CD4-positive, alpha-beta memory T cell (primary cell): ENCODE measurements at regions of chr16 and their contacts with region 1.

Region 1: DNA sequence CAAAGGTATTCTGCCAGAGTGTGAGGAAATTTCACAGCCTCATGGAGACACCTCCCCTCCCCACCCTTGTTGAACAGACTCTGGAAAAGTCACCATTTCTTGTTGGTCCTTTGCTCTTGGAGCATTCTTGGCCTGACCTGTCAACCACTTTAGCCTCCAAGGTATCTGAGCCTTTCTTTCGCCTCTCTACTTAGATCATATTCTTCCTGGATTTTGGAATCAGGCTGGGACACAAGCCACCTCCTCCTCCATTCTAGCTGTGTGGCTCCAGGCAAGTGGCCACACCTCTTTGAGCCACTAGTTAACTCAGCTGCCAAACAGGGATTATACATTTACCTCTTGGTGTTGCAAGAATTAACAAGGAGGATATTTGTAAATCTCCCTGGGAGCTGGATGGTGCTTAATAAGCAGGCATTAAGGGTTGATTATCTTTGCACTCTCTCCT is 193.5 kb downstream of the WWOX start:
- DNase-seq: no peak
- H3K4me3 ChIP-seq: no peak overlapping the region
- H3K4me3 Mint-ChIP-seq: no peak overlapping the region
- H3K27ac ChIP-seq: no peak overlapping the region
- H3K27ac Mint-ChIP-seq: no peak overlapping the region
- H3K4me1 ChIP-seq: no peaks in the 10 kb centered on the region
- H3K4me1 Mint-ChIP-seq: no peaks in the 10 kb centered on the region
- H3K27me3 ChIP-seq: no peaks in the 10 kb centered on the region
- H3K27me3 Mint-ChIP-seq: no peaks in the 10 kb centered on the region

Region 2: GRCh38 chr16:78211893-78212292 is 81.0 kb before region 1 on chr16:
- CTCF ChIA-PET with region 1: no interaction called
- POLR2A ChIA-PET with region 1: no interaction called
- intact Hi-C with region 1: no loop called
- DNase-seq: no peak
- H3K4me3 ChIP-seq: no peak overlapping the region
- H3K4me3 Mint-ChIP-seq: no peak overlapping the region
- H3K27ac ChIP-seq: no peak overlapping the region
- H3K27ac Mint-ChIP-seq: no peak overlapping the region
- H3K4me1 ChIP-seq: no peaks in the 10 kb centered on the region
- H3K4me1 Mint-ChIP-seq: no peaks in the 10 kb centered on the region
- H3K27me3 ChIP-seq: no peaks in the 10 kb centered on the region
- H3K27me3 Mint-ChIP-seq: no peaks in the 10 kb centered on the region

Region 3: DNA sequence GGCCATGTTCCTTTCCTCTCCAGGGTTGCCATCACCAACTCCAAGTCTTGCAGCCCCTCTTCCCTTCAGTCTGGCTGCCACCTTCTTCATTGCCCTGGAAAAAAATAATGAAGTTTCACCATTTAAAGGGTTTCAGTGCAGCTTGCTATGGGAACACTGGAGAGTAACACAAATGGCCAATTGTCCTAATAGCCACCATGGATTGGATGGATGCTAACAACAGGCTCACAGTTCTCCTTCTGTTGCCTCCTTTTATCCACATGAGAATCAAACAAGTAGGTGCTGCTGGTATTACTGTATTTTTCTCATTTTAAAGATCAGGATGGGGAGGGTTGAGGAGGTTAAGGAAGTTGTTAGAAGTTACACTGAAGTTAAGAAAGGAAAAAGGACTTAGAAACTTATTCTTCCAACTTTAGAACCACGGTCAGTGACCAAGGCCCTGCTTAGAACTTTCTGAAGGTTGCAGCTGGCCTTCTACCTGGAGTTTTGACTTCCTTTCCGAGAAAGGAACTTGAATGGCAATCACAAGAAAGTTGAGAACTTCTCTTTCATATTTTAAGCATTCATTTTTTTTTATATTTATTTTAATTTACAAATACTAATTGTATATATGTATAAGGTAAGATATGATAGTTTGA is 1505.6 kb after region 1 on chr16:
- CTCF ChIA-PET with region 1: no interaction called
- POLR2A ChIA-PET with region 1: no interaction called
- intact Hi-C with region 1: loop called (anchors 5 kb)
- DNase-seq: no peak
- H3K4me3 ChIP-seq: no peak overlapping the region
- H3K4me3 Mint-ChIP-seq: no peak overlapping the region
- H3K27ac ChIP-seq: no peak overlapping the region
- H3K27ac Mint-ChIP-seq: no peak overlapping the region
- H3K4me1 ChIP-seq: no peaks in the 10 kb centered on the region
- H3K4me1 Mint-ChIP-seq: no peaks in the 10 kb centered on the region
- H3K27me3 ChIP-seq: no peaks in the 10 kb centered on the region
- H3K27me3 Mint-ChIP-seq: peaks cover 2% of the 10 kb centered on the region in 2 donors